ENCODE measurements at regions of chr17 and their contacts with region 1.

Region 1: GRCh38 chr17:76997981-76998531 is 129.9 kb downstream of the MGAT5B start:
- DNase-seq: peak; percentile 95
- H3K4me3 ChIP-seq: peak overlapping the region; percentile 50
- H3K27ac ChIP-seq: peak overlapping the region; percentile 90
- H3K4me1 ChIP-seq: peaks cover 65% of the 10 kb centered on the region
- CTCF ChIP-seq: no peak

Region 2: GRCh38 chr17:76968707-76969597 is 29.1 kb before region 1 on chr17:
- CTCF ChIA-PET with region 1: interaction called, 3 read pairs
- POLR2A ChIA-PET with region 1: interaction called, 9 read pairs
- intact Hi-C with region 1: loop called (anchors 1 kb)
- DNase-seq: peak; percentile 100
- H3K4me3 ChIP-seq: peak overlapping the region; percentile 76
- H3K27ac ChIP-seq: peak overlapping the region; percentile 86
- H3K4me1 ChIP-seq: peaks cover 44% of the 10 kb centered on the region
- CTCF ChIP-seq: peak; percentile 43; the same call in 1 of the 2 replicates

Region 3: DNA sequence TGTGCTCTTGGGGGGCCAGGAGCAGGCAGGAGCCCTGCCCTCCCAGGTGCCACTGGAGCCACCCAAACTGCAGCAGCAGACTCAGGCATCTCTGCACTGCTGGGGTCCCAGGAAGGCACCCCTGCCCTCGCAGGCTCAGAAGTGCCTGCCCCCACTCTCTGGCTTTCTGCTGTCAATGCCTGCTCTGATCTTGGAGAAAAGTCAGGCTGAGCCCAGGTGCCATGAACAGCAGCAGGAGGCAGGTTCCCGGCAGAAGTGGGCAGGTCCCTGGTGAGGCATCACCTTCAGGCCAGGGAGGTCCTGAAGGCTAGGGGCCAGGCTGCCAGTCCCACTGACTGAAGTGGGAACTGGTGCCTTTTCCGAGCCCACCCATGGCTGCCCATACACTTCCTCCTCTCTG is 23.3 kb before region 1 on chr17:
- CTCF ChIA-PET with region 1: interaction called, 10 read pairs
- POLR2A ChIA-PET with region 1: interaction called, 9 read pairs
- intact Hi-C with region 1: loop called (anchors 1 kb)
- DNase-seq: no peak
- H3K4me3 ChIP-seq: no peak overlapping the region
- H3K27ac ChIP-seq: no peak overlapping the region
- H3K4me1 ChIP-seq: peaks cover 17% of the 10 kb centered on the region
- CTCF ChIP-seq: no peak

Measured in OCI-LY7 (cell line).